ENCODE measurements at regions of chr1 and their contacts with region 1.

Region 1: DNA sequence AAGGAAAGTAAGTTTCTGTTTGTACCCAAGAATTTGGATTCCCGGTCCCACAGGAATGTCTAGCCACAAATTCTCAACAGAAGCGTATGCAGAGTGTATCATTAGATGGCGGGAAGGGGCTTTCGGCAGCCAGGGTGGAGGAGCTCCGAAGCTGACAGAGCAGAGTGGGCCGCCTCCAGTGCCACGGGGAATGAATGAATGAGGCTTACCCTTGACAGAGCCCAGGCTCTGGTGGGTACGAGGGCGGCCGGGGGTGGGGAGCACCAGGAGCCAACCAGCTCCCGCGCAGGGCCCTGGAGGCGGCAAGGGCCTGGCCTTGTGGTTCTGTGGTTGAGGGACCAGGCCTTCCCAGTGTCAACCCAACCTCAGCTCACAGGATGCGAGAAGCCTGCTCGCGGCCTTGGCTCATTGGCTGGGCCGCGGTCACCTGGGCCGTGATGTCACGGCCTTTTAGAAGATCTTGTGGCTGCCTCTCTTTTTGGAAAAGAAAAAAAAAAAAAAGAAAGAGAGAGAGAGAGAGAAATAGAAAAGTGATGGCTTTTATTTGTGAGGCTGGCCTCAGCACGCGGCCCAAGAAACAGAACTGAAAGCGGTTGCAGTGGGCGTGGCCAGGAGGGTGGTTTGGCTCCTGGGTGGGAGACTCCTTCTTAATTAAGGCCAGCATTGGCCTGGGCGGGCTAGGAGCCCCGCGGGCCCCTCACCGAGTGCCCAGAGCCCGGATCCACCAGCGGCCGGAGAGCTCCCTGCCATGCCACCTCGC is 34.9 kb upstream of the RUNX3 start:
- DNase-seq: peak; percentile 71 to 96 (median 92)
- ATAC-seq: peak; percentile 84 to 93
- H3K4me3 Mint-ChIP-seq: peak overlapping the region; percentile 86 to 97 (median 93)
- H3K27ac Mint-ChIP-seq: peak overlapping the region; percentile 95 to 98 (median 96)
- H3K4me1 Mint-ChIP-seq: peaks cover 40 to 81% (median 77%) of the 10 kb centered on the region in 4 donors
- H3K27me3 Mint-ChIP-seq: no peaks in the 10 kb centered on the region

Region 2: DNA sequence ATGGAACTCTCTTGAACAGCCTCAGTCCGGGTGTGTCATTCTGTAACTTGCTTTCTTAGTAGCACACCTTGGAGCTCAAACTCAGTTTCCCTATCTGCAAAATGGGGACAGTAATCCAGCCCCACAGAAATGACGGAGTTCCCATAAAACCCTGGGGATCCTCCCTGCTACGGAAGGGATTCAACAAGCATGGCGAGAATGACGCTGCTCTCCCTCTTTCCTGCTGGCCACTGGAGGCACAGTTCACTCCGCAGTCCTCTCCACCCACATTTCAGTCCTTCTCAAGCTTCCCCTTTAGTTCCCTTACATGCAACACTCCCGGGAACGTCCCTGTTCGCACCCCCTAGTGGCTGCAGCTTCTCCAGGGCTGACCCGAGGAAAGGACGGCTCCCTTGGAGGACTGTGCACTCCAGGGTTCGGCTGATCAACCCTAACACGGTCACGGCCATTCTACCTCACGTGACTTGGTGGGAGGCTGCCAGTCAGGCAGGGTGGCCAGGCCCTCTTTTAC is 55.5 kb before region 1 on chr1:
- POLR2A ChIA-PET with region 1: interaction called, 11 read pairs
- DNase-seq: no peak
- ATAC-seq: no peak
- H3K4me3 Mint-ChIP-seq: peak overlapping the region in 8 of 10 donors; percentile 16 to 78 (median 44)
- H3K27ac Mint-ChIP-seq: peak overlapping the region; percentile 96 to 100 (median 99)
- H3K4me1 Mint-ChIP-seq: peaks cover 28 to 81% (median 69%) of the 10 kb centered on the region in 4 donors
- H3K27me3 Mint-ChIP-seq: no peaks in the 10 kb centered on the region

Region 3: DNA sequence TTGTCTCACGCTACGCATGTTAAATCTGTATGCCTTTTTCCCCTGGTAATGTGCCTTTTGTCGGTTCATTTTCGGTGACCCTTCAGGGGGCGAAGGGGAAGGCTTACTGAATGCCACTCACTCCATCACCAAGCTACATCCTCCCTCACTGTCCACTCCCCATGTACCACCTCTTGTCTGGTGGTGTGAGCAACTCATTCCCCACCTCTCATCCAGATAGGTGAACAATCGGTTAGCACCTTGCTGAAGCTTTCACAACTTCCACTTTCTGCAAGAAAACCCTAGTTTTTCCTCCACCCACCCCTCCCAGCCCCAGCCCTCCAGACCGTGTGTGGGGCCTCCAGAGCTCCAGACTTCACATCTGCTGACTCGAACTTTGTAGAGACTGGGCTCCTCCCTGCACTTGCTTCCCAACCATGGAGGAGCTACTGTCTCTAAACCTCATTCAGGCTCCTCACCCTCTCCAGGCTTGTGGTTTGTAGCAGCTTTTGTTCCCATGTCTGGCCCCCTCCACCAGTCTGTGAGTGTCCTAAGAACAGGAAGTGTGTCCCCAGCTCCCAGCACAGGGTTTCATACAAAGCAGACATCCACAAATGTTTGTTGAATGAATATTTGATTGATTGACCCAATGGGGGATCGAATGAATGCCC is 13.5 kb after region 1 on chr1:
- POLR2A ChIA-PET with region 1: interaction called, 135 read pairs
- DNase-seq: no peak
- ATAC-seq: no peak
- H3K4me3 Mint-ChIP-seq: peak overlapping the region in 5 of 10 donors; percentile 16 to 47 (median 24)
- H3K27ac Mint-ChIP-seq: peak overlapping the region in 9 of 10 donors; percentile 61 to 88 (median 74)
- H3K4me1 Mint-ChIP-seq: peaks cover 48 to 79% (median 73%) of the 10 kb centered on the region in 4 donors
- H3K27me3 Mint-ChIP-seq: no peaks in the 10 kb centered on the region

Region 4: GRCh38 chr1:24987875-24988557 is 23.0 kb after region 1 on chr1:
- POLR2A ChIA-PET with region 1: interaction called, 135 read pairs
- DNase-seq: peak in 3 of 10 donors; percentile 42 to 64 (median 46)
- ATAC-seq: peak; percentile 50 to 80
- H3K4me3 Mint-ChIP-seq: peak overlapping the region in 9 of 10 donors; percentile 16 to 84 (median 75)
- H3K27ac Mint-ChIP-seq: peak overlapping the region; percentile 83 to 96 (median 90)
- H3K4me1 Mint-ChIP-seq: peaks cover 74 to 100% (median 98%) of the 10 kb centered on the region in 4 donors
- H3K27me3 Mint-ChIP-seq: no peaks in the 10 kb centered on the region

Region 5: GRCh38 chr1:24996983-24997893 is 32.2 kb after region 1 on chr1:
- POLR2A ChIA-PET with region 1: interaction called, 81 read pairs
- DNase-seq: peak; percentile 38 to 88 (median 68)
- ATAC-seq: peak; percentile 80 to 83
- H3K4me3 Mint-ChIP-seq: peak overlapping the region; percentile 7 to 87 (median 68)
- H3K27ac Mint-ChIP-seq: peak overlapping the region; percentile 92 to 100 (median 96)
- H3K4me1 Mint-ChIP-seq: peaks cover 43 to 92% (median 89%) of the 10 kb centered on the region in 4 donors
- H3K27me3 Mint-ChIP-seq: no peaks in the 10 kb centered on the region

Region 6: DNA sequence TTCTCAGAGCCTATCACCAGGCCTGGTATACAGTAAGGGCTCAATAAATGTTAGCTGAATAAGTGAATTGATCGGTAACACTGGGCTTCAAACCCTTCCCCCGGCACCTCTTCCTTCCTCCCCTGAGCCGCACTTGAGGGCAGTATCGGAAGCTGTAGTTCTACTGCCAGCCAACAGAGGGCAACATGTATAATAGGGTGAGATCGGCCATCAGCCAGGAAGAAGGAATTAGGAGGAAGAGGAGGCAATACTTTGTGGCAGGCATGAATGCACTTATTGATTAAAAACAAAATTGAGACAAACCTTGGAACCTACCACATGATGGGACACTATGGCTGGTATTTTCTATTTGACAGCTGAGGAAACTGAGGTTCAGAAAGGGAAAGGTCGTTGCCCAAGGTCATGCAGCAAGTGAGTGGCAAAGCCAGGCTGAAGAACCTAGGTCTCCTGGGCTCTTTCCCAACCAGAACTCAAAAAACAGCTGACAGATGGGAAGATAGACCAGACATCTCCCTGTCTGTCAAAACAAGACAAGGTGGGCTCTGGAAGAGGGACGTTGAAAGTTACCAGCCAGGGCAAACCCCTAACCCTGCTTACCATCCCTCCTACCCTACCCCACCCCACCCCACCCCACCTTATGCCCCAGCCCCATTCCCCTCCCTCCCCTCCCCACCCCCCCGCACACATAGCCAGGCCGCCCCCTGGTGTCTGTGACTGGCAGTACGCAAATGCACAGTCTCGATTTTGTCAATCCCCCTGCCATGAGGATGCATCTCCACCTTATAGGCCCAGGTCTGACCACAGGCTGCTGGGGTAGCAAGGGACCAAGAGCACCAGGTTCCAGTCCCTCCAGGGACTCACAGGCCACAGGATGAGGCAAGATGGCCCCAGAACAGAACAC is 72.4 kb after region 1 on chr1:
- POLR2A ChIA-PET with region 1: interaction called, 83 read pairs
- DNase-seq: peak; percentile 37 to 81 (median 56)
- ATAC-seq: peak; percentile 45 to 54
- H3K4me3 Mint-ChIP-seq: peak overlapping the region in 7 of 10 donors; percentile 1 to 29 (median 14)
- H3K27ac Mint-ChIP-seq: peak overlapping the region in 8 of 10 donors; percentile 12 to 90 (median 50)
- H3K4me1 Mint-ChIP-seq: peaks cover 32 to 42% (median 36%) of the 10 kb centered on the region in 4 donors
- H3K27me3 Mint-ChIP-seq: no peaks in the 10 kb centered on the region

Region 7: GRCh38 chr1:25065795-25066238 is 100.8 kb after region 1 on chr1:
- POLR2A ChIA-PET with region 1: no interaction called
- DNase-seq: peak in 3 of 10 donors; percentile 25 to 66 (median 29)
- ATAC-seq: peak in 1 of 2 donors; percentile 35
- H3K4me3 Mint-ChIP-seq: peak overlapping the region in 6 of 10 donors; percentile 4 to 91 (median 54)
- H3K27ac Mint-ChIP-seq: peak overlapping the region in 6 of 10 donors; percentile 25 to 97 (median 72)
- H3K4me1 Mint-ChIP-seq: peaks cover 10 to 36% (median 23%) of the 10 kb centered on the region in 4 donors
- H3K27me3 Mint-ChIP-seq: no peaks in the 10 kb centered on the region

Measured in naive thymus-derived CD8-positive, alpha-beta T cell (primary cell).